Activated naive CD4-positive, alpha-beta T cell treated with anti-CD3 and anti-CD28 coated beads for 36 hours (primary cell): ENCODE measurements at regions of chr15 and their contacts with region 1.

Region 1: GRCh38 chr15:41401904-41402267 is 410 bp downstream of the NDUFAF1 start:
- DNase-seq: no peak
- H3K4me3 Mint-ChIP-seq: peak overlapping the region; percentile 89
- H3K27ac Mint-ChIP-seq: peak overlapping the region; percentile 87
- H3K4me1 Mint-ChIP-seq: peaks cover 17% of the 10 kb centered on the region
- H3K27me3 Mint-ChIP-seq: no peaks in the 10 kb centered on the region

Region 2: GRCh38 chr15:40941528-40942336 is 460.2 kb before region 1 on chr15:
- CTCF ChIA-PET with region 1: no interaction called
- intact Hi-C with region 1: loop called (anchors 5 kb)
- DNase-seq: peak; percentile 80
- H3K4me3 Mint-ChIP-seq: peak overlapping the region; percentile 82
- H3K27ac Mint-ChIP-seq: peak overlapping the region; percentile 78
- H3K4me1 Mint-ChIP-seq: peaks cover 32% of the 10 kb centered on the region
- H3K27me3 Mint-ChIP-seq: no peaks in the 10 kb centered on the region

Region 3: GRCh38 chr15:41116116-41116871 is 285.6 kb before region 1 on chr15 and contains the start of gene INO80:
- CTCF ChIA-PET with region 1: interaction called, 3 read pairs
- intact Hi-C with region 1: loop called (anchors 1 kb)
- DNase-seq: peak; percentile 99
- H3K4me3 Mint-ChIP-seq: peak within 1 kb of the TSS; percentile 88
- H3K27ac Mint-ChIP-seq: peak within 1 kb of the TSS; percentile 96
- H3K4me1 Mint-ChIP-seq: peaks cover 21% of the 10 kb centered on the region
- H3K27me3 Mint-ChIP-seq: no peaks in the 10 kb centered on the region
- total RNA-seq, gene INO80: 14.0 to 16.8 TPM

Region 4: GRCh38 chr15:41283653-41284426 is 118.0 kb before region 1 on chr15:
- CTCF ChIA-PET with region 1: no interaction called
- intact Hi-C with region 1: loop called (anchors 5 kb)
- DNase-seq: peak; percentile 99
- H3K4me3 Mint-ChIP-seq: peak overlapping the region; percentile 99
- H3K27ac Mint-ChIP-seq: peak overlapping the region; percentile 97
- H3K4me1 Mint-ChIP-seq: peaks cover 45% of the 10 kb centered on the region
- H3K27me3 Mint-ChIP-seq: no peaks in the 10 kb centered on the region

Region 5: GRCh38 chr15:41309226-41309905 is 92.5 kb before region 1 on chr15:
- CTCF ChIA-PET with region 1: no interaction called
- intact Hi-C with region 1: no loop called
- DNase-seq: no peak
- H3K4me3 Mint-ChIP-seq: no peak overlapping the region
- H3K27ac Mint-ChIP-seq: no peak overlapping the region
- H3K4me1 Mint-ChIP-seq: peaks cover 4% of the 10 kb centered on the region
- H3K27me3 Mint-ChIP-seq: no peaks in the 10 kb centered on the region

Region 6: DNA sequence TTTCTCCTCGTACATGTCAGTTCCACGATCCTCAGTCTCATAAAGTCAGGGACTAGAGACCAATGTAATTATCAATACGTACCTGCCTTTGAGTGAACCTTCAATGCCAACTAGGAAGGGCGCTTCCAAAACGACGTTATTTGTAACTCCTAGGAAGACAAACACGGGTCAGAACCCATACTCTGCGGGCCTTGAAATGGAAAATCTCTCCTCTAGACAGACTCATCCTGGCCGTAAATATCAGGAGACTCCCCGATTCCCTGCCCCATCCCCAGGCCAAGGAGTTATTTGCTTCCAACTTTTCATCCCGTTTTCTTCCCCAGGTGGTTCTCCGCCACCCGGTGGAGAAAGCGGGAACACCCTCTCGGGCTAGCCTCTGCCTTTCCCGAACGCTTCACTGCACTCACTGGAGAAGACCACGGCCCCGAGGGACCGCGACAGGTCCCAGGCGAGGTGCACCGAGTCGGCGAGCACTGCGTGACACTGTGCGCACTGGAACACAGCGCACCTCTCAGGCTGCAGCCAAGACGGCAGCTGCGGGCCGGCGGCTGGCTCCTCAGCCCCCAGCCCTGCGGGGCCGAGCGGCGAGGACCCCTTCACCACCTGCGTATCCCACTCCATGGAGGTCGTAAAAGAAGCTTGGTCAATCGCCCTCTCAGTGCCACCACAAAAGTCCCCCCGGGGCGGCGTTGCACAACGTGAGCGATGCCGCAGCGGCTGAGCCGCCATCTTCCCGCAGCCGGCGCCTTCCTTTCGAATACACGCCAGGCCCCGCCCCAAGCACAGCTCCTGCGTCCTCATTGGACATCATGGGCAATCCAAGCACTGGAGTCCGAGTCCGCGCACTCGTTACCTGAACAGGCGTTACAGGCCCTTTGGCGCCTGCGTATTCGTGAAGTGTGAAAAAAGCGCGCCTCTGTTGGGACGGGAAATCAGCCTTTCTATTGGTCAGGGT is 69.8 kb before region 1 on chr15 and contains the start of gene OIP5:
- CTCF ChIA-PET with region 1: no interaction called
- intact Hi-C with region 1: loop called (anchors 1 kb)
- DNase-seq: peak; percentile 100
- H3K4me3 Mint-ChIP-seq: peak within 1 kb of the TSS; percentile 100
- H3K27ac Mint-ChIP-seq: peak within 1 kb of the TSS; percentile 98
- H3K4me1 Mint-ChIP-seq: peaks cover 26% of the 10 kb centered on the region
- H3K27me3 Mint-ChIP-seq: no peaks in the 10 kb centered on the region
- total RNA-seq, gene OIP5: 9.5 to 10.7 TPM

Region 7: DNA sequence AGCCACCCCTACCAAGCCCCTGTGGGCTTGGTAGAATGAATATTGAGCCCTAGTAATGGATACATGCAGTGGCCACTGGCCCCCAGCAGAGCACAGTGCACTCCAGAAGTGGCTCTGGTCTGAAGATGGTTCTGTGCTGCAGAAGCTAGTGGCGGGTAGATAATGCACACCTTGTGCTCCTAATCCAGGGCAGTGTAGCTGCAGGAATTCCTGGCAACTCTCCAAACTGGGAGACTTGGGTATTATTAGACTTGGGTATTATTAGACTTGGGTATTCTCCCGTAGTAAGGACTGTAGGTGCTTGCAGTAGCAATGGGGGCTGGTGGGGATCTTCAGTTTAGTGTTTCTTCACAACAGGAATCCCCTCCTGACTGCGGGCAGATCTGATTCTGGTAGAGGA is 34.5 kb before region 1 on chr15:
- CTCF ChIA-PET with region 1: no interaction called
- intact Hi-C with region 1: loop called (anchors 1 kb)
- DNase-seq: no peak
- H3K4me3 Mint-ChIP-seq: no peak overlapping the region
- H3K27ac Mint-ChIP-seq: no peak overlapping the region
- H3K4me1 Mint-ChIP-seq: no peaks in the 10 kb centered on the region
- H3K27me3 Mint-ChIP-seq: no peaks in the 10 kb centered on the region

Region 8: GRCh38 chr15:41416742-41417406 is 15.0 kb after region 1 on chr15 and contains the start of gene RTF1:
- CTCF ChIA-PET with region 1: no interaction called
- intact Hi-C with region 1: loop called (anchors 1 kb)
- DNase-seq: peak; percentile 95
- H3K4me3 Mint-ChIP-seq: peak within 1 kb of the TSS; percentile 87
- H3K27ac Mint-ChIP-seq: peak within 1 kb of the TSS; percentile 89
- H3K4me1 Mint-ChIP-seq: peaks cover 43% of the 10 kb centered on the region
- H3K27me3 Mint-ChIP-seq: no peaks in the 10 kb centered on the region
- total RNA-seq, gene RTF1: 18.7 to 19.5 TPM